H1 (cell line): ENCODE measurements at regions of chr1 and their contacts with region 1.

Region 1: DNA sequence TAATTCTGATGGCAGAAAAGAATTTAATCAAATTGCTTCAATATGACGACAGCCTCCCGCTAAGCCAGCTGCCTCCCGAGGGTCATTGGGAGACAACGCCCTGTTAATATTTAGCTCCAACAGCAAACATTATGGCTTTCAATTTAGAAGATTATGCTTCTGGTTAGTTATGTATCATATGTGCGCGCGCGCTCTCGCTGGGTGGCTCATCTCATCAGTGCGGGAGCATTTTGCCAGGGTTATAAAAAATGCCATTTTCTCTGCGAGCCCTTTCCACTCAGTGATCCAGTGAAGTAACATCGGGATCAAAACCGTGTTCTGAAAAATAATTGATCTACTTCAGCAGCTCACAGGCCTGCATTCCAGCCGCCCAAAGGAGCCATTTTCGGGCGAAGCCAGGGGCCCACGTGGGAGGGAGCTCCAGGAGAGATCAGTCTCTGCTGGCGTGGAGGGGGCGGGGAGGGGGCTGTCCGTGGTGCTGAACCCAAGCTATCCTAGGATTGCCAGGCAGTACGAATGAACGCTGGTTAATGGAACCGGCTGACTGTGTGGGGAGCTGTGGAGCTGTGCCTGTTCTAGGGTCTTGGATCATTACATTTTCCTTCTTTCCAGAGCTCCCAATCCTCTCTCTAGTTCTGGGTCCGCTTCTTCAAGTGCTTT is 219.1 kb upstream of the ZC3H12A start:
- DNase-seq: peak; percentile 63 to 93
- H3K4me3 ChIP-seq: peak overlapping the region in 2 of 4 experiments; percentile 0 to 42; a peak in 4 of 8 replicates
- H3K27ac ChIP-seq: no peak overlapping the region
- H3K4me1 ChIP-seq: peaks cover 0 to 13% (median 4%) of the 10 kb centered on the region in 4 experiments; a peak in 5 of 7 replicates
- H3K27me3 ChIP-seq: peaks cover 0 to 7% (median 1%) of the 10 kb centered on the region in 4 experiments; a peak in 2 of 7 replicates
- CTCF ChIP-seq: peak; percentile 45 to 61 (median 58)
- EP300 ChIP-seq: no peak
- POLR2A ChIP-seq: no peak
- RAD21 ChIP-seq: peak; percentile 62 to 77

Region 2: GRCh38 chr1:37123266-37124115 is 131.8 kb before region 1 on chr1:
- CTCF ChIA-PET with region 1: no interaction called
- POLR2A ChIA-PET with region 1: no interaction called
- DNase-seq: no peak
- H3K4me3 ChIP-seq: no peak overlapping the region
- H3K27ac ChIP-seq: no peak overlapping the region
- H3K4me1 ChIP-seq: no peaks in the 10 kb centered on the region
- H3K27me3 ChIP-seq: no peaks in the 10 kb centered on the region; a peak in 1 of 7 replicates
- CTCF ChIP-seq: no peak
- EP300 ChIP-seq: no peak
- POLR2A ChIP-seq: no peak
- RAD21 ChIP-seq: no peak

Region 3: DNA sequence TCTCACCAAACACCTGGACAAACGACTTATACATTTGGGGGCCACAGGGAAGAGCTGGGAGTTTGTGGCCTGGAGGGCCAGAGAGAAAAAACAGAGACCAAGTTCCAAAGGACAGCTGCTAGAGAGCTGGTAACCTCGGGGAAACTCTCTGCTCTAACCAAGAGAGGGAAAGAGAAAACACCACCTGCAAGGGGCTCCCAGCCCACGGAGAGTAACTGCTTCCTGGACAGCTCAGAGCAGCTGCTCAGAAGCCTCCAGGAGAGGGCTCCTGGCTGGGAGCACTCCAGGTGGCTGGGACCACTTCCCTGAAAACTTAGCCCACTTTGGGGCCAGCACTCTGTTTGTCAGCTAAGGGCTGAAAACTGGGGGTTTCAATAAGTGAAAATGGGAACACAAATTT is 66.2 kb before region 1 on chr1:
- CTCF ChIA-PET with region 1: no interaction called
- POLR2A ChIA-PET with region 1: no interaction called
- DNase-seq: no peak
- H3K4me3 ChIP-seq: no peak overlapping the region
- H3K27ac ChIP-seq: no peak overlapping the region
- H3K4me1 ChIP-seq: no peaks in the 10 kb centered on the region
- H3K27me3 ChIP-seq: no peaks in the 10 kb centered on the region
- CTCF ChIP-seq: no peak
- EP300 ChIP-seq: no peak
- POLR2A ChIP-seq: no peak
- RAD21 ChIP-seq: no peak; a peak in 1 of 4 replicates

Region 4: GRCh38 chr1:37243368-37244082 is 11.7 kb before region 1 on chr1:
- CTCF ChIA-PET with region 1: interaction called, 10 read pairs
- POLR2A ChIA-PET with region 1: interaction called, 6 read pairs
- DNase-seq: peak in 1 of 2 experiments; percentile 41
- H3K4me3 ChIP-seq: no peak overlapping the region
- H3K27ac ChIP-seq: no peak overlapping the region
- H3K4me1 ChIP-seq: peaks cover 0 to 25% (median 12%) of the 10 kb centered on the region in 4 experiments; a peak in 6 of 7 replicates
- H3K27me3 ChIP-seq: no peaks in the 10 kb centered on the region; a peak in 1 of 7 replicates
- CTCF ChIP-seq: no peak
- EP300 ChIP-seq: no peak
- POLR2A ChIP-seq: no peak
- RAD21 ChIP-seq: no peak

Region 5: DNA sequence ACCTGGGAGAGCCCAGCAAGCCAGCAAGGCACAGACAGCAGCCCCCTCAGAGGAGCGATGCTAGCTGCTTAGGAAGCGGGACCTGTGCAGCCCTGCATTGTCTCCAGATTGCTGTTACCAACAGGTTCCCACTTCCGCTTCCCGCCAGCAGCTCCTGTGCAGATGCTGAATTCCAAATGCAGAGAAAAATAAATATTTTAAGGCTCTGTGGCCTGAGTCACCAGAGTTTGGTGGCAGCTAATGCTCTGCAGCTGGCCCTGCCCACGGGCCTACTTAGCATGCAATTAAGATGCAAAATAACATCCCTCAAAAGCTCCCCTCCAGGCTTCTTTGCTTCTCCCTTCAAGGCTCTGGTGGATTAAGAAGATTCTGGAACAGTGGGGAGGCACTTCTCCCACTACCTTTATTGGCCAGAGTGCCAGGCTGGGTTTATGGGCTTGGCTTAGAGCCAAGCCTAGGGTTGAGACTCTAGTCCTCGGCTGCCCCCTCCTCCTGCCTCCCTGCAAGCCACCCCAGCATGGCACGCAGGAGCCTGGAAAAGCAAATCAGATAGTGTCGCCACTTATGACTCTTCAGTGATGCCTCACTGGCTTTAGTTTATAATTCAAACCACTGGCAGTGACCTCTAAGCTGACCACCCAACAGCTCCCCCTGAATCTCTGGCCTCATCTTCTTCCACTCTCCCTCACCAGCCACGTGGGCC is 12.0 kb after region 1 on chr1:
- CTCF ChIA-PET with region 1: interaction called, 20 read pairs
- POLR2A ChIA-PET with region 1: interaction called, 4 read pairs
- DNase-seq: no peak
- H3K4me3 ChIP-seq: no peak overlapping the region
- H3K27ac ChIP-seq: no peak overlapping the region
- H3K4me1 ChIP-seq: peaks cover 0 to 10% (median 5%) of the 10 kb centered on the region in 4 experiments; a peak in 4 of 7 replicates
- H3K27me3 ChIP-seq: no peaks in the 10 kb centered on the region; a peak in 1 of 7 replicates
- CTCF ChIP-seq: no peak
- EP300 ChIP-seq: no peak
- POLR2A ChIP-seq: no peak
- RAD21 ChIP-seq: no peak